AG04449 (cell line): ENCODE measurements at regions of chr19 and their contacts with region 1.

Region 1: GRCh38 chr19:13093407-13094105 is 9.1 kb downstream of the LYL1 start:
- DNase-seq: no peak
- H3K4me3 ChIP-seq: no peak overlapping the region
- CTCF ChIP-seq: peak; percentile 90

Region 2: GRCh38 chr19:12994701-12995595 is 98.6 kb before region 1 on chr19 and contains the start of gene NFIX:
- CTCF ChIA-PET with region 1: interaction called, 13 read pairs
- POLR2A ChIA-PET with region 1: no interaction called
- DNase-seq: no peak
- H3K4me3 ChIP-seq: peak within 1 kb of the TSS; percentile 80
- CTCF ChIP-seq: no peak

Region 3: DNA sequence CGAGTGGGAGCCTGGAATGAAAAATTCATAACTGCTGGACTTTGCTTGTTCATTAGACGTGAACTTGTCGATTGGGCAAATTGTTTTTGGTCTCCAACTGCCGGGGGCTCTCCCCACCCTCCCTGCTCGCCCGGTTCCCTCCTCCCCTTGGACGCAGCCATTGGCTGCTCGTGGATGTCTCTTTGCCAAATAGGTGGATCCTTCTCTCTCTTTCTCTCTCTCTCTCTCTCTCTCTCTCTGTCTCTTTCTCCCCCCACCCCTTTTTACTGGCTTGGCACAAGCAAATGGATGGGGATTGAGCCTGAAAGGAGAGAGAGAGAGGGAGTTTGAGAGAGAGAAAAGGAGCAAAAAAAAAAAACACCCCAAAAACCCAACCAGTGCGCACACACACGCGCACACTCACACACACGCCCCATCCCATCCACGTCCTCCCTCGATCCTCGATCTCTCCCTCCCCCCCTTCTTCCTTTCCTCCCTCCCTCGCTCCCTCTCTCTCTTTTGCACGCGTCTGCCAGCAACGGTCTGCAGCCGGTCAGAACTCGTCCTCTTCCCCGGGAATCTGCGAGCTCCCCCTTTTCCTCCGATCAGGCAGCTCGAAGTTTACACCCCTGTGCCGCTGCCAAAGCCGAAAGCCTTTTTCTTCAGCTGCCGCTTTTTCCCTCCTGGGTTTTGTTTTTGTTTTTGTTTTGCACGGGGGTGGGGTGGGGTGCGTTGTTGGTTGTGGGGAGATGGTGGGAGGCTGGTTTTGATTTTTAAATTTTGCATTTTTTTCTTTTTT is 70.5 kb before region 1 on chr19:
- CTCF ChIA-PET with region 1: interaction called, 16 read pairs
- POLR2A ChIA-PET with region 1: no interaction called
- DNase-seq: peak; percentile 88
- H3K4me3 ChIP-seq: peak overlapping the region; percentile 65
- CTCF ChIP-seq: no peak

Region 4: GRCh38 chr19:13044231-13044836 is 49.2 kb before region 1 on chr19:
- CTCF ChIA-PET with region 1: interaction called, 11 read pairs
- POLR2A ChIA-PET with region 1: no interaction called
- DNase-seq: no peak
- H3K4me3 ChIP-seq: no peak overlapping the region
- CTCF ChIP-seq: no peak

Region 5: DNA sequence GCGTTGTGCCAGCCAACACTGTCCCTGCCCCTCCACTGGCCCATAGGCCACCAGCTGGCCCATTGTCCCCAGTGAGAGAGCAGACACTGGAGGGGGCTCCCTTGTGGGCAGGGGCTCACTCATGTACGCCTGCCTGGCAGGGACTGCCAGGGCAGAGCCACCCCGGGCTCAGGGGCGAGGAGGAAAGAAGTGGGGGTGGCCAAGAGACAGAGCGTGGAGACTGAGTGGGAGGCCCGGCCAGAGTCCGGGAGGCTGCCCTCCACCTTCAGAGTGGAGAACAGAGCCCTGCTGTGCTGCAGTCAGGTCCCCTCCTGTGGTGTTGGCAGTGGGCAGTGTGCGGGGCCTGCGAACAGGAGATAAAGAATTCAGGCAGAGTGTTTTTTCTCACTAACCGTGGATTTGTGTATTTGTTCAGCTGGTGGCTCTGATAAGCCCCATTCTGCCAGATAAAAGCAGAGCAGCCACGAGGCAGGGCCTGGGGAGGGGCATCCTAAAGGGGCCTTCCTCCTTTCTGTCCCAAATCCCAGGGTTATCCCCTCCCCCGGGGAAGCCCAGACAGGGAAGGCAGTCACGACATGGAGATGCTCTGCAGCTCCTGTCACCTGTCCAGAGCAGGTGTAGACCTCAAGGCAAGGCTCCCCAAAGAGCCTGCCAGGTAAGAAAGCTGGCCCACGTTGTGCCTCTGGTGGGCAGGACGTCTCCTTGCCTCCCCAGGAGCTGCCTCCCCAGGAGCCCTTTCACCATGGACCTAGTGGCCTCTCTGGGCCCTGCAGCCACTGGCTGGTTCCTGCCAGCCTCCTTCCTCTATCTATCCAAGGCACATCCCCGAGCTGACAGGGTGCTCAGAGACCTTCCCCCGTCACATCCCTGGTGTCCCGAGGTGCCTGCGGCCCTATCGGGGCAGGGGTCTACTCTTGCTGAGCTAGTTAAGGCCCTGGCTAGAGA is 23.9 kb before region 1 on chr19:
- CTCF ChIA-PET with region 1: interaction called, 550 read pairs
- POLR2A ChIA-PET with region 1: no interaction called
- DNase-seq: no peak
- H3K4me3 ChIP-seq: no peak overlapping the region
- CTCF ChIP-seq: no peak

Region 6: DNA sequence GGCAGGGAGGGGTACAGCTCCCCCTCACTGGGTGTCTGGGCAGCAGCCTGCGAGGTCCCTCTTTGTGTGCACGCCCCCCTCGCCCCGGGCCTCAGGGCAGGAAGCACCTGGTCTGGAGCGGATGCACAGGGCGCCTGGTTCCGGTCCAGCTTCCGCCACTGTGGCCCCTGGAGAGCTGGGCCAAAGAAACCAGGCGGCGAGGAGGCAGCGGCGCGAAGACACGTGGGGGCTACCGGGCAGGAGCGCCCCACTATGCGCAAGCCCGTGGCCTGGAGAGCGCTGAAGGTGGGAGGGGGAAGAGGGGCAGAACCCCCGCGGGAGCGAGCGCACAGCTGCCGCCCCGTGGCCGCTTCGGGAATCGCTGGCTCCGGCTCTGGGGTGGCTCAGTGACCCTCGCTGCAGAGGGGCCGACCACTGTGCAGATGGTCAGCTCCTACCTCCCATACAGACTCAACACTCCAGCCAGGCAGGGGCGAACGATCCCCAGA is 10.8 kb after region 1 on chr19:
- CTCF ChIA-PET with region 1: interaction called, 30 read pairs
- POLR2A ChIA-PET with region 1: interaction called, 4 read pairs
- DNase-seq: no peak
- H3K4me3 ChIP-seq: no peak overlapping the region
- CTCF ChIP-seq: peak; percentile 80

Region 7: GRCh38 chr19:13181747-13182388 is 88.3 kb after region 1 on chr19:
- CTCF ChIA-PET with region 1: no interaction called
- POLR2A ChIA-PET with region 1: no interaction called
- DNase-seq: no peak
- H3K4me3 ChIP-seq: no peak overlapping the region
- CTCF ChIP-seq: no peak

Region 8: GRCh38 chr19:13252569-13253335 is 159.2 kb after region 1 on chr19:
- CTCF ChIA-PET with region 1: no interaction called
- POLR2A ChIA-PET with region 1: no interaction called
- DNase-seq: no peak
- H3K4me3 ChIP-seq: no peak overlapping the region
- CTCF ChIP-seq: no peak